Heart right ventricle (tissue), 16 donors: ENCODE measurements at regions of chr5 and their contacts with region 1.

Region 1: GRCh38 chr5:157130925-157131324 is 11.7 kb downstream of the MED7 start:
- DNase-seq: no peak
- ATAC-seq: peak in 6 of 8 donors; percentile 25 to 83 (median 59)
- H3K4me3 ChIP-seq: no peak overlapping the region
- H3K27ac ChIP-seq: no peak overlapping the region
- H3K4me1 ChIP-seq: peaks cover 0 to 28% (median 10%) of the 10 kb centered on the region in 9 donors
- H3K27me3 ChIP-seq: no peaks in the 10 kb centered on the region
- CTCF ChIP-seq: no peak

Region 2: GRCh38 chr5:155616779-155617392 is 1514.0 kb before region 1 on chr5:
- intact Hi-C with region 1: loop called in 1 of 10 experiments (anchors 10 kb)
- DNase-seq: peak; percentile 13 to 18
- ATAC-seq: peak in 3 of 8 donors; percentile 45 to 55 (median 51)
- H3K4me3 ChIP-seq: no peak overlapping the region
- H3K27ac ChIP-seq: no peak overlapping the region
- H3K4me1 ChIP-seq: peaks cover 0 to 5% (median 0%) of the 10 kb centered on the region in 9 donors
- H3K27me3 ChIP-seq: no peaks in the 10 kb centered on the region
- CTCF ChIP-seq: peak; percentile 30 to 70 (median 56)

Region 3: DNA sequence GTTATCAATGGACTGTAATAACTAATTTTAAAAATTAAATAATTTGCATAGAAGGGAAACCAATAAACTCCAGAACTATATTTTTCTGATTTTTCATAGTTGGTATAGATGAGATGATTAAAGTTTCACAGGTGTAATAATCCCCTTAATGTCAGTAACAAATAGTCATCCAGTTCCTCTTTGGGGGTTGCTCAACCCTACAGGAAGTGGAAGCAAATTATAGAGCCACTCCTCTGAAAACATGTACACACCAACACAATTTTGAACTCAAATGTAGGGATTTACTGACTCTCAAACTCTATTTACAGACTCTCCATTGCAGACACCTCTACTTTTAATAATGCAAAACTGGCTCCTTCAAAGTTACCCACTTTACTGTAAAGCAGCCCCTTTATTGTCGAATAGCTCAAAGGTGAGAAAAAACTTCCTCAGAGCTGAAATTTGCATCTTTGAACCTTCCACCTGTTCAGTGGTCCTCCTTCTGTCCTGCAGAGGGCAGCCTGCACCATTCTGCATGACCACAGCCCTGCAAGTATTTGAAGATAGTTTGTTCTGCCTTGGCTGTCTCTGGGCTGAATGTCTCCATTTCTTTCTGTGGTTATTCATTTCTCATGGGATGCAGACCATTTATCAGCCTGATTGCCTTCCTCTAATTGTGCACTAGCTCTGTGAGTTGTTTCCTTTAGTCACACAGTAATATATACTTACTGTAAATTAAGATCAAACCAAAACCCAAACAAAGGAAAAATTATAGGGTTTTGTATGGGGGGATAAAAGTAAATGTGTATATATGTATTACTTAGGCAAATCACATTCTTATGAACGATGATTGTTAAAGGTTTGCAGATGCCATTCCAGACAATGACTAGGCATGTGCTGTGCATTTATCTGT is 1187.2 kb before region 1 on chr5:
- intact Hi-C with region 1: loop called in 1 of 10 experiments (anchors 10 kb)
- DNase-seq: peak; percentile 27 to 31
- ATAC-seq: peak in 7 of 8 donors; percentile 65 to 89 (median 75)
- H3K4me3 ChIP-seq: no peak overlapping the region
- H3K27ac ChIP-seq: no peak overlapping the region
- H3K4me1 ChIP-seq: peaks cover 0 to 4% (median 0%) of the 10 kb centered on the region in 9 donors
- H3K27me3 ChIP-seq: no peaks in the 10 kb centered on the region
- CTCF ChIP-seq: peak; percentile 31 to 83 (median 72)

Region 4: DNA sequence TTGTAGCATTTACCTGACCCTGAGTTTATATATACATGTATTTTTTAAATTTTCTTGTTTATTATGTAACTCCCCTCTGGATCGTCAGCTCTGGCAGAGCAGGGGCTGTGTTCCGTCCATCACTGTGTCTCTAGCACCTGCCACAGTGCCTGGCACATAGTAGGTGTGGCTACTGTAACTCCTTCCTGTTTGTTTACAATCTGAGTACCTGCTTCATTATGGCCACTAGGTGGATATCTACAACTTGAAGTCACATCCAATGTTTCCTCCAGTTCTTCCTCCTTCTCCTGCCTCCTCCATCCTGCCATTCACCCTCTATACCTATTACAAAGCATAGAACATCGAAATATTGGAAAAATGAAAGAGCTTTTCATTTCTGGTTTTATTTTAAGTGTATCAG is 295.0 kb before region 1 on chr5:
- intact Hi-C with region 1: loop called in 2 of 10 experiments (anchors 10 kb)
- DNase-seq: no peak
- ATAC-seq: no peak
- H3K4me3 ChIP-seq: no peak overlapping the region
- H3K27ac ChIP-seq: no peak overlapping the region
- H3K4me1 ChIP-seq: no peaks in the 10 kb centered on the region
- H3K27me3 ChIP-seq: no peaks in the 10 kb centered on the region
- CTCF ChIP-seq: peak in 2 of 9 donors; percentile 8

Region 5: DNA sequence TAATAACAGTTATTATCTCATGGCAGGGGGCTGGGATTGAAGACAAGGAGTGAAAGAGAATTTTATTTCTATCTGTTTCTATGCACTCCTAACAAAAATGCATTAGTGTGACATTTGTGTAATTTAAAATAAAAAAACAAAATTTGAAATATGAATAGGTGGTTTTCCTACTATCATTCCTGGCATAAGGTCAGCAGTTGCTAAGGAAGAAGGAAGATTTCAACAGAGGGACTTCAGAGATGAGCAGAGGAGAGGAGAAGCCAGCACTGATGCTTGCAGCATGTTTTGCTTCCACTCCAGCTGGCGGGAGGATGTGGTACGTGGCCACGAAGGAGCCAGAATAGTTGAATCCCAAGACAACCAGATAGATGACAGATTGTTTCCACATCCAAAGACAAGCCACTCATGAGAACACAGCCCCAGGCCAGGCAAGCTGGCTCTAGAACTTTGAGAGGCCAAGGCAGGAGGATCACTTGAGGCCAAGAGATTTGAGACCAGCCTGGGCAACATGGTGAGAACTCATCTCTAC is 183.1 kb before region 1 on chr5:
- intact Hi-C with region 1: no loop called
- DNase-seq: no peak
- ATAC-seq: no peak
- H3K4me3 ChIP-seq: no peak overlapping the region
- H3K27ac ChIP-seq: no peak overlapping the region
- H3K4me1 ChIP-seq: no peaks in the 10 kb centered on the region
- H3K27me3 ChIP-seq: no peaks in the 10 kb centered on the region
- CTCF ChIP-seq: no peak